A549 (cell line): ENCODE measurements at regions of chr4 and their contacts with region 1.

Region 1: DNA sequence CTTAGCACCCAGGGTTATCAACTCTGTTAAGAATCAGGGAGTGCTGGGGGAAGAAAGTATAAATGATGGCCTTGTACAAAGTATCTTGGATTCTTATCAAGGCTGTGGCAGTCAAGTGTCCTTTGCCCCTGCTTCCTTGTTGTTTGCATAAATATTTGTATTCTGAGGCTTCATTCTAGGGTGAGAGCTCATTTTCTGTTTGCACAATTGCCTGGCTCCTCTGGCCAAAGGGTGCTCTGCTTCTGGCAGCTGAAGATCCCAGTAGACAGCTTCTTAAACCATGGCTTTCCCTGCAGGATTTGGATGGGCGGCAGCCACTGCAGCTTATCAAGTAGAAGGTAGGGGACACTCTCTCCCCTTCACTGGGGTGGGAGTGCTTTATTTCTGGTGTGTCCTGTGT is at the start of gene GBA3:
- DNase-seq: no peak
- ATAC-seq: no peak
- H3K4me3 ChIP-seq: no peak within 1 kb of the TSS
- H3K27ac ChIP-seq: no peak within 1 kb of the TSS
- H3K4me1 ChIP-seq: no peaks in the 10 kb centered on the region
- CTCF ChIP-seq: no peak
- EP300 ChIP-seq: no peak
- POLR2A ChIP-seq: no peak
- RAD21 ChIP-seq: no peak
- polyA plus RNA-seq, gene GBA3: not detected in 2 replicates

Region 2: DNA sequence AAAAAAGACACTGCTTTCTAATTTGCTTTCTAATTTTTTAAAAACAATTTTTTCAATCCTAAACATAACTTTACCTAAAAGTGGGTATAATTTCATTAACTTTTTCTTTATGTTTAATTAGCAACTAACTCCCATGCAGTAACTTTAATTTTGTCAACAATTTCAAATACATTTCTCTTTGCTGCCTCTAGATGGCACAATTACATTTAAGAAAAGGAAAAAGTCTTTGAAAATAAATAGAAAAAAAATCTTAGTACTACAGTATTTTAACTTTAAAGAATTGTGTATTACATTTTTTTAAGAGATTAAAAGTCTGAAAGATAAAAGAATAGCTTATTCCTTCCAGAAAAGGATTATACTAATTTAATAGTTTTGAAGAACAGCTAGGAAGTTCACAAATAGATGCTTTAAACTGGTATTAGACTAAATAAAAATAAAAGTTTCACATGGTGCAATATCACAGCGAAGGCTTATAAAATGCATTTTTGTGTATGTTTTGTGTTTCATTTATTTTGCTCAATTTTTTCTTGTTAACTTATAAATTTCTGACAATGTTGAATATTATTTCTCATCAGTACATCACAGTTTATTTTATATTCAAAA is 282.0 kb before region 1 on chr4:
- CTCF ChIA-PET with region 1: interaction called, 15 read pairs
- POLR2A ChIA-PET with region 1: no interaction called
- DNase-seq: no peak
- ATAC-seq: no peak
- H3K4me3 ChIP-seq: no peak overlapping the region
- H3K27ac ChIP-seq: no peak overlapping the region
- H3K4me1 ChIP-seq: no peaks in the 10 kb centered on the region
- CTCF ChIP-seq: peak; percentile 26; the same call in 2 of the 3 replicates
- EP300 ChIP-seq: no peak
- POLR2A ChIP-seq: no peak
- RAD21 ChIP-seq: peak; percentile 40 to 60; a peak in 4 of 5 replicates